Endothelial cell of umbilical vein (primary cell): ENCODE measurements at regions of chr11 and their contacts with region 1.

Region 1: GRCh38 chr11:14435717-14436512 is 63.7 kb downstream of the COPB1 start:
- DNase-seq: no peak
- H3K4me3 ChIP-seq: no peak overlapping the region
- H3K27ac ChIP-seq: no peak overlapping the region
- H3K4me1 ChIP-seq: no peaks in the 10 kb centered on the region
- H3K27me3 ChIP-seq: no peaks in the 10 kb centered on the region
- CTCF ChIP-seq: no peak
- POLR2A ChIP-seq: no peak

Region 2: DNA sequence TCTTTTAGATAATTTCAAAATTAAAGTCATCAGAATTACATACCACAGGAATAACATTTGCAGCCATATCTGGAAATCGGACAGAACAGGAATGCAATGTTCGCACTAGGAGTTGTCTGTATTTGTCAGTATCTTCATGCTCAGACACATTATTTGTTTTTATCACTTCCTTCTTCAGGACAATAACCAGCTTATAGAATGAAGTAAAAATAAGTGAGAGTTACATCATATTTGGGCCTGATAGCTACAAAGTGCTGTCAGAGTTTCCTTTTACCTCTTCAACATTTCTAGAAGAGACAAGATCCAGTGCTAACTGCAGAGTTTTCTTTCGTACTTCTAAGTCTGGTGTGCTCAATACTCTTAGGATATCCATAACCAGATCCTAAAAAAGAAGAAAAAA is 44.8 kb after region 1 on chr11:
- CTCF ChIA-PET with region 1: no interaction called
- POLR2A ChIA-PET with region 1: no interaction called
- dilution Hi-C with region 1: no loop called
- intact Hi-C with region 1: loop called (anchors 2 kb)
- DNase-seq: no peak
- H3K4me3 ChIP-seq: no peak overlapping the region
- H3K27ac ChIP-seq: no peak overlapping the region
- H3K4me1 ChIP-seq: no peaks in the 10 kb centered on the region
- H3K27me3 ChIP-seq: no peaks in the 10 kb centered on the region
- CTCF ChIP-seq: no peak
- POLR2A ChIP-seq: no peak